Spleen (tissue), 13 donors: ENCODE measurements at regions of chr9 and their contacts with region 1.

Region 1: DNA sequence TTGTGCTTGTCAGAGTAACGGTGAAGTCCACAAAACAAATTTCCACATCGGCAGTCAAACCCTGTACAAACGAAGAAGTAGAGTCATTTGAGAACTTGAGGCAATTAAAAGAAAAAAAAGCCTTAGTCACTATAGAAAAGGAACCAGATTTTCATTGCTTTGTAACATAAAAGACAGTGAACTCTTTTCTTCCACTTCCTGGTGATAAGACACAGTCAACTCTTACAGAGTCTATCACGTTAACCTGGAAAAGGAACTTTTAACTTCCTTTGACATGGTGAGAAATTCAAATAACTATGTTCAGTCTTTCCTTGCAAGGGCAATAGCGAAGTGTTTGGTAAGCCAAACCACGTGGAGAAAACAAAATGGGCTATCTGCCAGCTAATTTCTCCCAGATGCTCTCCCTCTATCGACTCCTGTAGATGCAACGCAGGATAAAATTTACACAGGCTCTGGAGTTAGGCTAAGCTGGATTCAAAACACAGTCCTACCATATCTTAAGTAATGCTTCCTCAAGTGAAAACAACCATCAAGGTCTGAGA is 8.9 kb downstream of the ZFAND5 start:
- DNase-seq: no peak
- H3K4me3 ChIP-seq: peak overlapping the region in 1 of 8 donors; percentile 33
- H3K27ac ChIP-seq: peak overlapping the region; percentile 11 to 81 (median 58)
- H3K4me1 ChIP-seq: peaks cover 32 to 80% (median 62%) of the 10 kb centered on the region in 6 donors
- H3K27me3 ChIP-seq: no peaks in the 10 kb centered on the region
- CTCF ChIP-seq: no peak
- POLR2A ChIP-seq: no peak

Region 2: GRCh38 chr9:72305102-72305546 is 51.0 kb before region 1 on chr9:
- intact Hi-C with region 1: loop called (anchors 10 kb)
- DNase-seq: peak; percentile 87
- H3K4me3 ChIP-seq: peak overlapping the region in 6 of 8 donors; percentile 13 to 65 (median 22)
- H3K27ac ChIP-seq: peak overlapping the region; percentile 61 to 92 (median 88)
- H3K4me1 ChIP-seq: peaks cover 13 to 56% (median 32%) of the 10 kb centered on the region in 6 donors
- H3K27me3 ChIP-seq: no peaks in the 10 kb centered on the region
- CTCF ChIP-seq: no peak
- POLR2A ChIP-seq: no peak